ENCODE measurements at regions of chr17 and their contacts with region 1.

Region 1: DNA sequence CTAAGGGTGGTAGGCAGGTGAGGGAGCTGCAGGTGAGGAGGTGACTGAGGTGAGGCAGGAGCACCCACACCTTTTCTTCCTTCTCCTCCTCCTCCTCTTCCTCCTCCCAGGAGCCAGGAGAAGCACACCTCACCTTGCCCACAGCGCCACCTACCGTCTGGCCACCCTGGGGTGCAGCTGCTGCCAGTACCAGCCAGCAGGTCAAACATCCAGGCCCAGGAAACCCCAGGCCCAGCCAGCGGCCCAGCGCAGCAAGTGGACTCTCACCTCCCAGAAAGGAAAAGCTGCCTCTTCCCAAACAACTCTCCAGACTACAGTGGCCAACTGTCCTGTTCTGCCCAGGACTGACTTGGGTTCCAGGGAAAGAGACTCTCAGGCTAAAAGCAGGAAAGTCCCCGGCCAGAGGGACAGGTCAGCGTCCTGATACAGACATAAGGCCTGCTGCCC is 22.7 kb downstream of the PEMT start:
- DNase-seq: peak; percentile 85
- H3K4me3 ChIP-seq: no peak overlapping the region
- H3K27ac ChIP-seq: no peak overlapping the region
- H3K4me1 ChIP-seq: peaks cover 0 to 52% of the 10 kb centered on the region in 2 experiments; a peak in 1 of 4 replicates
- H3K27me3 ChIP-seq: no peaks in the 10 kb centered on the region
- CTCF ChIP-seq: peak; percentile 71
- EP300 ChIP-seq: no peak
- RAD21 ChIP-seq: peak; percentile 71

Region 2: GRCh38 chr17:17356149-17356930 is 212.4 kb before region 1 on chr17:
- CTCF ChIA-PET with region 1: interaction called, 107 read pairs
- POLR2A ChIA-PET with region 1: no interaction called
- DNase-seq: peak; percentile 90
- H3K4me3 ChIP-seq: no peak overlapping the region; a peak in 1 of 4 replicates
- H3K27ac ChIP-seq: no peak overlapping the region
- H3K4me1 ChIP-seq: peaks cover 0 to 26% of the 10 kb centered on the region in 2 experiments; a peak in 1 of 4 replicates
- H3K27me3 ChIP-seq: no peaks in the 10 kb centered on the region
- CTCF ChIP-seq: peak; percentile 99
- EP300 ChIP-seq: no peak
- RAD21 ChIP-seq: peak; percentile 100

Region 3: GRCh38 chr17:17506811-17507464 is 61.8 kb before region 1 on chr17:
- CTCF ChIA-PET with region 1: interaction called, 26 read pairs
- POLR2A ChIA-PET with region 1: no interaction called
- DNase-seq: peak; percentile 48
- H3K4me3 ChIP-seq: no peak overlapping the region
- H3K27ac ChIP-seq: no peak overlapping the region
- H3K4me1 ChIP-seq: peaks cover 2 to 21% of the 10 kb centered on the region in 2 experiments; a peak in 2 of 4 replicates
- H3K27me3 ChIP-seq: no peaks in the 10 kb centered on the region
- CTCF ChIP-seq: no peak
- EP300 ChIP-seq: no peak
- RAD21 ChIP-seq: no peak

Region 4: DNA sequence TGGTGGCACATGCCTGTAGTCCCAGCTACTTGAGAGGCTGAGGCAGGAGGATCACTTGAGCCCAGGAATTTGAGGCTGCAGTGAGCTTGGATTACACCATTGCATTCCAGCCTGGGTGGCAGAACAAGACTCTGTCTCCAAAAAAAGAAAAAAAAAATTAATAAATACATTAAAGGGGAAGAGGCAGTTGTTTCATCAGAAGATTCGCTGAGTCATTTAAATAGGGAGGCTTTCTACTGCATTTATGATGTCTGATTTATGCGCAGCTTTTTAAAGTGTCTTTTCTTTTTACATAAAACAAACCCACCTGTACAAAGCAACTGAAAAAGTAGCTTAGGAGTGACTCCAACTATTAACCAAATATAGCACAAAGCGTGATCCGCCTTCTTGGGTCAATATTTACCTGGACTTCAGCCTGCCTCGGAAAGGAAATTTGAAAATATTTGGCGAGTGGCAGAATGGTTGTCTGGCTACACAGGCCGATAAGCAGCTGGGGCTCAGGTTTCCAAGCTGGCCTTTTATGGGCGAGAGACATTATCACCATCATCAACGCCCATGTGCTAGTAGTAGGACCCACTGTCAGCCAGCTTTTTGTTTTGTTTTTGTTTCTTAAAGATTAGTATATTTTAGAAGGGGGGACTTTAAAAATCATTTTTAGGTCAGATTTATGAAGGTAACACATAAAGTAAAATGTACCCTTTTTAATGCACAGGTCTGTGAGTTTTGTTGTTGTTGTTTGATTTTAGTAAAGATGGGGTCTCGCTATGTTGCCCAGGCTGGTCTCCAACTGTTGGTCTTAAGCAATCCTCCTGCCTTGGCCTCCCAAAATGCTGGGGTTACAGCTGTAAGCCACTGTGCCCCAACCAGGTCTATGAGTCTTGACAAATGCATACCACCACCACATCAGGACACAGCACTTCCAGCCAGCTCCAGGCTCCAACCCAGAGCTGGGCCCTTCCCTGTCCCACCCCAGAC is 30.1 kb before region 1 on chr17:
- CTCF ChIA-PET with region 1: interaction called, 15 read pairs
- POLR2A ChIA-PET with region 1: no interaction called
- DNase-seq: no peak
- H3K4me3 ChIP-seq: no peak overlapping the region
- H3K27ac ChIP-seq: no peak overlapping the region
- H3K4me1 ChIP-seq: peaks cover 0 to 65% of the 10 kb centered on the region in 2 experiments; a peak in 1 of 4 replicates
- H3K27me3 ChIP-seq: no peaks in the 10 kb centered on the region
- CTCF ChIP-seq: no peak
- EP300 ChIP-seq: no peak
- RAD21 ChIP-seq: no peak

Region 5: DNA sequence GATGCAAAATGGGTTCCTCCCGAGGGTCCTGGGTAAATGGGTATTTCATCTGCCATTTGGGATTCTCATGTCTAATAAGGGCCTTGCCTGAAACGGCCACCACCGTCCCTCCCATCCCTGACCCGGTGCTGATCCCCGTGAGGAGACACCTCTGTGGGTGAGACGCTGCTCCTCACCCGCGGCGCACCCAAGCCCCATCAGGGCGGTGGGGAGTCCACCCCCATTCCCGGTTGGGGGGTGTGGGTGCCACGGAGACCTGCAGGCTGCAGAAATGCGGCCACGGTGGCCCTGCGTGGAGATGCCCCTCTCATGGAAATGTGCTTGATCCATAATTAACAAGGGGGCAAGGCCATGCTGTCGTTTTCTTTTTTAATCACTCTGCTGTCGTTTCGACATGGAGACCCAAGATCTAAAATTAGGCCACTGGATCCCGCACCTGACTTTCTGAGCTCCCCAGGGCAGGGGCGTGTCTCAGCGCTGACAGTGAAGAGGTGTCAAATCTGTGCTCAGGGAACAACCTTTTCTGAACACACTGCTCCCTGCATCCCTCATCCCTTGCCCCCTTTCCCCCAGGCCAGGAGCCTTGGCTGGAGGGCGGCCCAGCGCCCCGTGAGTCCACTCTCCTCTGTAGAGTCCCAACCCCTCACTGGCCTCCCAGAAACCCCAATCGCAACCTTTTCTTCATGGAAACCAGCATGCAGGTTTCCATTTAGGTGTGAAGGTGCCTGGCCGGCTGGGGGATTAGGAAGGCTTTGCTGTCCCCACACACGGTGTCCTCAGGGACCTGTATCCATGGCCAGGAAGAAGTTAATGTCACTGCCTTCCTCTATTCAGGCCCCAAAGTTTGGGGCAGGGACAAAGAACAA is 16.2 kb before region 1 on chr17:
- CTCF ChIA-PET with region 1: interaction called, 31 read pairs
- POLR2A ChIA-PET with region 1: no interaction called
- DNase-seq: no peak
- H3K4me3 ChIP-seq: no peak overlapping the region
- H3K27ac ChIP-seq: no peak overlapping the region
- H3K4me1 ChIP-seq: peaks cover 0 to 28% of the 10 kb centered on the region in 2 experiments; a peak in 2 of 4 replicates
- H3K27me3 ChIP-seq: no peaks in the 10 kb centered on the region
- CTCF ChIP-seq: no peak
- EP300 ChIP-seq: no peak
- RAD21 ChIP-seq: no peak

Region 6: DNA sequence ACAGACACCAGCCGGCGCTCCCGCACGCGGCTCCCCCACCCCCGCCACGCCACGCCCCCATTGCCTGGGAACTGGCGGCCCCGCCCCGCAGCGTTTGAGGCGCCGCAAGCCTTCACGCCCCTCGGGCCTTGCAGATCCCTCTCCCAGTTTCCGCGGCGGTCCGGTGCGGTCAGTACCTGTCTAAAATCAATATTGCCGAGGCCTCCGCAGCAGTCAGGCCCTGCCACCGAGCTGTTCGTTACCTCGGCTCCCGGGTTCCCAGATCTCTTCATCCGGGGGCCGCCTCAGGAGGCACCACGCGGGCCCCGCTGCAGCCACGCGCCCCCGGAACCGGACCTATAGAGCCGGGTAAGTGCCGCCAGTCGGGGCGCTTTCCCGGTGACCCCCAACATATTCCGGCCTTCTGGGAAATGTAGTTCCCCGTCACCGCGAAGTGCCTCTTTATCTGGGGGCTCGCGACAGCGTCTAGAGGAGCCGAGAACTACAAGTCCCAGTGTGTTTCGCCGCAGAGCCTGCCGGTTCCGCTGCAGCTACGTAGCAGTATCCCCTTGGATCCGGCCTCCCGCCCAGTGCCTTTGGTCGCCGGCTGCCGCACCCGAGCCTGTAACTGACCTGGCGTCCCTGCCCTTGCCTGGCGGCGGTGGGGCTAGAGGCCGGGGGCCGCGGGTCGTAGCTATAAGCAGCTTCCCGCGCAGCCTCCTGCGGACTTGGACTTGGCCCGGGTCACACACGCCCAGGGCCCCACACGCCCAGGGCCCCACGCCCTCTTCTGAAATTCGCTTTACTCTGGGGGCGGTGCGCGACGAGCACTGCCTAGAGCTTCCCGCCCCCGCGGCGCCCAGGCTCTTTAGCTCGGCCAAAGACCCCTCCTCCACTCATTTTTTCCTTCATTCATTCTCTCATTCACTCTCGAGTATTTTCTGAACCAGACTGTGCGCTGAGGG is 22.9 kb after region 1 on chr17 and contains the start of gene PEMT:
- CTCF ChIA-PET with region 1: interaction called, 21 read pairs
- POLR2A ChIA-PET with region 1: no interaction called
- DNase-seq: peak; percentile 96
- H3K4me3 ChIP-seq: peak within 1 kb of the TSS; percentile 85 to 88
- H3K27ac ChIP-seq: peak within 1 kb of the TSS; percentile 77 to 92
- H3K4me1 ChIP-seq: peaks cover 4 to 21% of the 10 kb centered on the region in 2 experiments; a peak in 1 of 4 replicates
- H3K27me3 ChIP-seq: no peaks in the 10 kb centered on the region
- CTCF ChIP-seq: no peak
- EP300 ChIP-seq: no peak
- RAD21 ChIP-seq: no peak
- polyA plus RNA-seq, gene PEMT: 49.8 and 52.8 TPM in 2 replicates

Measured in SK-N-SH (cell line).